Esophagus muscularis mucosa (tissue), 4 donors: ENCODE measurements at regions of chr7 and their contacts with region 1.

Region 1: GRCh38 chr7:5445981-5446594 is 22.5 kb upstream of the TNRC18 start:
- DNase-seq: no peak
- H3K4me3 ChIP-seq: no peak overlapping the region
- H3K27ac ChIP-seq: no peak overlapping the region
- H3K4me1 ChIP-seq: peaks cover 0 to 39% (median 24%) of the 10 kb centered on the region in 4 donors
- H3K27me3 ChIP-seq: no peaks in the 10 kb centered on the region
- CTCF ChIP-seq: no peak
- EP300 ChIP-seq: no peak
- POLR2A ChIP-seq: no peak

Region 2: GRCh38 chr7:5237286-5237685 is 208.8 kb before region 1 on chr7:
- intact Hi-C with region 1: loop called (anchors 2 kb)
- DNase-seq: no peak
- H3K4me3 ChIP-seq: peak overlapping the region in 3 of 4 donors; percentile 16 to 30 (median 24)
- H3K27ac ChIP-seq: peak overlapping the region; percentile 22 to 56 (median 33)
- H3K4me1 ChIP-seq: peaks cover 12 to 28% (median 27%) of the 10 kb centered on the region in 4 donors
- H3K27me3 ChIP-seq: no peaks in the 10 kb centered on the region
- CTCF ChIP-seq: no peak
- EP300 ChIP-seq: no peak
- POLR2A ChIP-seq: no peak

Region 3: DNA sequence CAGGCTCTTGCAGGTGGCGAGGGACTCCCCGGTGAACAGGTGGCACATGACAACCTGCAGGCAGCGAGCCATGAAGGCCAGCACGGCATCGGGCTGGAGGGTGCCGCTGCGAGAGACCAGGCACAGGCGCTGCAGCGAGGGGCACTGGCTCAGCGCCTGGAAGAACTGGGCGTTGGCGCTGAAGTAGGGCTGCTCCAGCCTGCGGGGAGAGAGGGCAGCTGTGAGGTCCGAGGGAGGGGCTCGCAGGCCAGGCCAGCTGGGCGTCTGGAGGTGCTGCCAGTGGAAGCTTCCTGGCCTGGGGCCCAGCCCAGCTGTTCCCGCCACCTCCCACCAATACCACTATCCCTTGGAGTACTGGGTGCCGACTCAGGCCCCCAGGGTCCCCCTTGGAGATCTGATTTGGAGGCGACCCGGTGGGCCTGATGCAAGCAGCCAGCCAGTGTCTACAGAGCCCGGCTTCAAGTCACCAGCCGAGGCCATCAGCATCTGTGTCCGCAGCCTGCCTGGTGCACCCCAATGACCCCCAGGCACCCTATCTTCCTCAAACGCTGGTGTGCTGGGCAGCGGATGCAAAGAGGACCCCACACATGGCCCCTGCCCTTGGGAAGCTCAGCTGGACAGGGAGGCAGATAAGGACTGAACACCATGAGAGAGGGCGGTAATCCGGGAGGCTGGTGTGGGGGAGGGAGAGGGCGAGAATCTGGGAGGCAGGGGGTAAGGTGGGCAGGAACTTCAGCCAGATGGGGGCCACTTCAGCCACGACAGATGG is 45.3 kb after region 1 on chr7:
- intact Hi-C with region 1: no loop called
- DNase-seq: no peak
- H3K4me3 ChIP-seq: no peak overlapping the region
- H3K27ac ChIP-seq: peak overlapping the region in 1 of 4 donors; percentile 10
- H3K4me1 ChIP-seq: peaks cover 25 to 58% (median 48%) of the 10 kb centered on the region in 4 donors
- H3K27me3 ChIP-seq: no peaks in the 10 kb centered on the region
- CTCF ChIP-seq: no peak
- EP300 ChIP-seq: no peak
- POLR2A ChIP-seq: no peak